Activated B cell treated with CpG ODN at 0.5 μM for 24 hours (primary cell): ENCODE measurements at regions of chr14 and their contacts with region 1.

Region 1: DNA sequence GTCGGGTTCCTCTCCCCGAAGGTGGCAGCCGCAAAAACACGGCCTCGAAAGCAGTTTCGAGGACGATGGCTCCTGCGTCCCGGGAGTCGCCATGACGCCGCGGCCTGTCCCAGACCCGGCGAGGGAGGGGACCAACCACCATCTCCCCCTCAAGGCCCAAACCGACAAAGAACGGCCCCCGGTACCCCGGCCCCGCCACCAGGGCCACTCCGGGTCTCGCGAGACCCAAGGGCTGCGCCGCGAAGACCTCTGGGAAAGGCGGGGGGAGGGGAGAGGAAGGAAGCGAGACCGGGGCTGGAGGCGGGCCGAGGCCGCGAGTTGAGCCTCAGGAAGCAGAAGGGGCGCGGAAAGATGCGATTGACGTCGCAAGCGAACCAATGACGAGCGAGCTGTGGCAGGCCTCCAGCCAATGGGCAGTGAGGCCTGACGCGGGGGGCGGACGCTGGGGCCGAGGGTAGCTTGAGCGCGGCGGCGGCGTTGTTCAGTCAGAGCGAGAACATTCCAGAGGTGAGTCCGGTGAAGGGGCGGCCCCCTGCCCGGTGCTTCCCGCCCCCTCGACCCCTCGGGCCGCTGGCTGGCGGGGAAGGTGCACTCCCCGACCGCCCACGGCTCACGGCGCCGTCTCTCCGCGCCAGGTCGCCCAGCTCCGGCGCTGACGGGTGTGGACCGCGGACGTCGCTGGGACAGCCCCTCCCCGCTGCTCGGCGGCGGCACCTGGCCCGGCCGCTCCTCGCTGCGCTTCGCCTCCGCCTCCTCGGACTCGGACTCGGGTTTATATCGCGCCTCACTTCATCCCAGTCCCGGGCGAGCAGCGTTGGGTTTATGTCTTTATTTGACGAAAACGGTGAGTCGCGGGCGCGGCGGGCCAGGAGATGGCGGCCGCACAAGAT is at the start of gene EIF5:
- DNase-seq: peak; percentile 98
- ATAC-seq: peak; percentile 84
- H3K4me3 Mint-ChIP-seq: peak within 1 kb of the TSS; percentile 91
- H3K27ac Mint-ChIP-seq: peak within 1 kb of the TSS; percentile 93
- H3K4me1 Mint-ChIP-seq: peaks cover 33% of the 10 kb centered on the region
- H3K27me3 Mint-ChIP-seq: no peaks in the 10 kb centered on the region
- CTCF ChIP-seq: no peak
- total RNA-seq, gene EIF5: 234 and 274 TPM in 2 replicates

Region 2: GRCh38 chr14:102086972-102087761 is 1246.8 kb before region 1 on chr14 and contains the start of gene HSP90AA1:
- CTCF ChIA-PET with region 1: no interaction called
- POLR2A ChIA-PET with region 1: no interaction called
- intact Hi-C with region 1: loop called (anchors 5 kb)
- DNase-seq: peak; percentile 95
- ATAC-seq: peak; percentile 69
- H3K4me3 Mint-ChIP-seq: peak within 1 kb of the TSS; percentile 93
- H3K27ac Mint-ChIP-seq: peak within 1 kb of the TSS; percentile 88
- H3K4me1 Mint-ChIP-seq: peaks cover 60% of the 10 kb centered on the region
- H3K27me3 Mint-ChIP-seq: no peaks in the 10 kb centered on the region
- CTCF ChIP-seq: no peak
- total RNA-seq, gene HSP90AA1: 431 and 435 TPM in 2 replicates

Region 3: GRCh38 chr14:102645746-102646440 is 688.1 kb before region 1 on chr14:
- CTCF ChIA-PET with region 1: no interaction called
- POLR2A ChIA-PET with region 1: no interaction called
- intact Hi-C with region 1: no loop called
- DNase-seq: no peak
- ATAC-seq: peak; percentile 18
- H3K4me3 Mint-ChIP-seq: peak overlapping the region; percentile 6
- H3K27ac Mint-ChIP-seq: peak overlapping the region; percentile 0
- H3K4me1 Mint-ChIP-seq: peaks cover 69% of the 10 kb centered on the region
- H3K27me3 Mint-ChIP-seq: no peaks in the 10 kb centered on the region
- CTCF ChIP-seq: no peak

Region 4: GRCh38 chr14:103057365-103058096 is 276.5 kb before region 1 on chr14 and contains the start of gene CDC42BPB:
- CTCF ChIA-PET with region 1: no interaction called
- POLR2A ChIA-PET with region 1: no interaction called
- intact Hi-C with region 1: loop called (anchors 1 kb)
- DNase-seq: peak; percentile 82
- ATAC-seq: peak; percentile 89
- H3K4me3 Mint-ChIP-seq: peak within 1 kb of the TSS; percentile 87
- H3K27ac Mint-ChIP-seq: no peak within 1 kb of the TSS
- H3K4me1 Mint-ChIP-seq: peaks cover 32% of the 10 kb centered on the region
- H3K27me3 Mint-ChIP-seq: peaks cover 2% of the 10 kb centered on the region
- CTCF ChIP-seq: no peak
- total RNA-seq, gene CDC42BPB: 34.2 and 38.5 TPM in 2 replicates

Region 5: GRCh38 chr14:103185051-103185992 is 148.7 kb before region 1 on chr14:
- CTCF ChIA-PET with region 1: no interaction called
- POLR2A ChIA-PET with region 1: no interaction called
- intact Hi-C with region 1: no loop called
- DNase-seq: no peak
- ATAC-seq: peak; percentile 28
- H3K4me3 Mint-ChIP-seq: no peak overlapping the region
- H3K27ac Mint-ChIP-seq: no peak overlapping the region
- H3K4me1 Mint-ChIP-seq: peaks cover 7% of the 10 kb centered on the region
- H3K27me3 Mint-ChIP-seq: peaks cover 40% of the 10 kb centered on the region
- CTCF ChIP-seq: peak; percentile 61

Region 6: DNA sequence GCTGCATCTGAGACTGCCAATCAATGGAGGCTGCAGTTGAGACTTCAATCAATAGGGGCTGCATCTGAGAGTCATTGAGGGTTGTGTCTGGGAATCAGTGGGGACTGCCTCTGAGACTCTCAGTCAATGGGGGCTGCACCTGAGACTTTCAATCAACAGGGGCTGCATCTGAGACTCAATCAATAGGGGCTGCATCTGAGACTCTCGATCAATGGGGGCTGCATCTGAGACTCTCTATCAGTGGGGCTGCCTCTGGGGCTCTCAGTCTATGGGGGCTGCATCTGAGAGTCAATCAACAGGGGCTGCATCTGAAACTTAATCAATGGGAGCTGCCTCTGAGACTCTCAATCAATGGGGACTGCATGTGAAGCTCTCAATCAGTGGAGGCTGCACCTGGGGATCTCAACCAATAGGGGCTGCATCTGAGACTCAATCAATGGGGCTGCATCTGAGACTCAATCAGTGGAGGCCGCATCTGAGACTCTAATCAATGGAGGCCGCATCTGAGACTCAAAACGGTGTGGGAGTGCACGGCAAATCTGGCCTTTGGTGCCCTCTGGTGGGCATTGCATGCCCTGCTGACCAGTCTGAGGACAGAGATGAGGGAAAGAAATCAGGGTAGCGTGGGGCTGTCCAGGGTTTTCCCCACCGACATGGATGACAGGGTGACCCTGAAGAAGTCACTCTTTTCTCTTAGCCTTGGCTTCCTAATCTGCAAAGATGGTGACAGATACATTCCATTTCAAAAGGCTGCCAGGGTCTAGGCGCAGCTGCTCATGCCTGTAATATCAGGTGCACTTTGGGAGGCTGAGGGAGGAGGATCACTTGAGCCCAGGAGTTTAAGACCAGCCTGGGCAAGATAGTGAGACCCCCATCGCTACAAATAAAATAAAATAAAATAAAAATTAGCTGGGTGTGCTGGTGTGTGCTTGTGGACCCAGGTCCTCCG is 41.3 kb before region 1 on chr14:
- CTCF ChIA-PET with region 1: interaction called, 3 read pairs
- POLR2A ChIA-PET with region 1: interaction called, 9 read pairs
- intact Hi-C with region 1: loop called (anchors 2 kb)
- DNase-seq: peak; percentile 73
- ATAC-seq: peak; percentile 99
- H3K4me3 Mint-ChIP-seq: no peak overlapping the region
- H3K27ac Mint-ChIP-seq: no peak overlapping the region
- H3K4me1 Mint-ChIP-seq: peaks cover 6% of the 10 kb centered on the region
- H3K27me3 Mint-ChIP-seq: peaks cover 18% of the 10 kb centered on the region
- CTCF ChIP-seq: peak; percentile 24

Region 7: DNA sequence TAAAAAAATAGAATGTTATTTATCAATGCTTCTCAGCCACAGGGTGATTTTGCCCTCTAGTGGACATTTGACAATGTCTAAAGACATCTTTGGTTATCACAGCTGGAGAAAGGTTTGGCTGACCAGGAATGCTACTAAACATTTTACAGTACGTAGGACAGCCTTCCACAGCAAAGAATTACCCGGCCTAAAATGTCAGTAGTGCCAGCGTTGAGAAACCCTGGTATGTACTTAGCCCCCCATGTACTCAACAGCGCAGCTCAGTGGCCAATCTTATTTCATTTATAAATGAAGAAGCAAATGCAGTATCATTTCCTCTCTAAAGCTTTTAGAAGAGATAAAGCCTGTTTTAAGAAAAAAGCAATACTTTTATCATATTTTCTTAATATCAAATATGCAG is 57.0 kb after region 1 on chr14:
- CTCF ChIA-PET with region 1: interaction called, 29 read pairs
- POLR2A ChIA-PET with region 1: interaction called, 18 read pairs
- intact Hi-C with region 1: loop called (anchors 1 kb)
- DNase-seq: no peak
- ATAC-seq: peak; percentile 82
- H3K4me3 Mint-ChIP-seq: no peak overlapping the region
- H3K27ac Mint-ChIP-seq: peak overlapping the region; percentile 43
- H3K4me1 Mint-ChIP-seq: peaks cover 72% of the 10 kb centered on the region
- H3K27me3 Mint-ChIP-seq: no peaks in the 10 kb centered on the region
- CTCF ChIP-seq: no peak

Region 8: GRCh38 chr14:103562429-103563225 is 228.6 kb after region 1 on chr14 and contains the starts of genes BAG5 and COA8:
- CTCF ChIA-PET with region 1: no interaction called
- POLR2A ChIA-PET with region 1: interaction called, 5 read pairs
- intact Hi-C with region 1: loop called (anchors 1 kb)
- DNase-seq: peak; percentile 89
- ATAC-seq: peak; percentile 79
- H3K4me3 Mint-ChIP-seq: peak within 1 kb of the TSS; percentile 89
- H3K27ac Mint-ChIP-seq: peak within 1 kb of the TSS; percentile 79
- H3K4me1 Mint-ChIP-seq: peaks cover 52% of the 10 kb centered on the region
- H3K27me3 Mint-ChIP-seq: no peaks in the 10 kb centered on the region
- CTCF ChIP-seq: no peak
- total RNA-seq, gene BAG5: 26.9 and 28.8 TPM in 2 replicates
- total RNA-seq, gene COA8: 28.4 and 28.8 TPM in 2 replicates